Lower leg skin (tissue), 4 donors: ENCODE measurements at regions of chr2 and their contacts with region 1.

Region 1: GRCh38 chr2:149040451-149040850 is 2.0 kb downstream of the LYPD6B start:
- DNase-seq: peak in 1 of 2 donors; percentile 82
- H3K4me3 ChIP-seq: no peak overlapping the region
- CTCF ChIP-seq: no peak
- POLR2A ChIP-seq: no peak

Region 2: GRCh38 chr2:147806846-147807245 is 1233.6 kb before region 1 on chr2:
- intact Hi-C with region 1: loop called (anchors 5 kb)
- DNase-seq: no peak
- H3K4me3 ChIP-seq: no peak overlapping the region
- CTCF ChIP-seq: no peak
- POLR2A ChIP-seq: no peak